ENCODE measurements at regions of chr10 and their contacts with region 1.

Region 1: GRCh38 chr10:133144771-133145170 is 15.2 kb upstream of the KNDC1 start:
- DNase-seq: no peak
- ATAC-seq: no peak
- H3K4me3 ChIP-seq: no peak overlapping the region
- H3K4me3 Mint-ChIP-seq: no peak overlapping the region
- H3K27ac ChIP-seq: no peak overlapping the region
- H3K27ac Mint-ChIP-seq: no peak overlapping the region
- H3K4me1 ChIP-seq: no peaks in the 10 kb centered on the region
- H3K4me1 Mint-ChIP-seq: peaks cover 4 to 10% (median 6%) of the 10 kb centered on the region in 7 donors
- H3K27me3 ChIP-seq: no peaks in the 10 kb centered on the region
- H3K27me3 Mint-ChIP-seq: peaks cover 43 to 61% (median 56%) of the 10 kb centered on the region in 5 donors

Region 2: GRCh38 chr10:133278577-133279265 is 133.9 kb after region 1 on chr10:
- CTCF ChIA-PET with region 1: interaction called, 3 read pairs
- POLR2A ChIA-PET with region 1: no interaction called
- intact Hi-C with region 1: loop called (anchors 1 kb)
- DNase-seq: peak in 3 of 9 donors; percentile 17 to 60 (median 53)
- ATAC-seq: peak; percentile 69
- H3K4me3 ChIP-seq: peak overlapping the region; percentile 27
- H3K4me3 Mint-ChIP-seq: peak overlapping the region; percentile 50 to 84 (median 66)
- H3K27ac ChIP-seq: peak overlapping the region; percentile 50
- H3K27ac Mint-ChIP-seq: peak overlapping the region; percentile 66 to 93 (median 86)
- H3K4me1 ChIP-seq: peaks cover 22 to 34% of the 10 kb centered on the region in 2 donors
- H3K4me1 Mint-ChIP-seq: peaks cover 11 to 36% (median 21%) of the 10 kb centered on the region in 7 donors
- H3K27me3 ChIP-seq: no peaks in the 10 kb centered on the region
- H3K27me3 Mint-ChIP-seq: no peaks in the 10 kb centered on the region

Measured in naive thymus-derived CD4-positive, alpha-beta T cell (primary cell).